ENCODE measurements at regions of chr10 and their contacts with region 1.

Region 1: GRCh38 chr10:98170249-98171117 is 36.0 kb downstream of the R3HCC1L start:
- DNase-seq: peak; percentile 71
- ATAC-seq: peak; percentile 81
- H3K4me3 Mint-ChIP-seq: no peak overlapping the region
- H3K27ac Mint-ChIP-seq: no peak overlapping the region; the same call in 1 of the 2 replicates
- H3K4me1 Mint-ChIP-seq: peaks cover 75% of the 10 kb centered on the region
- H3K27me3 Mint-ChIP-seq: no peaks in the 10 kb centered on the region
- CTCF ChIP-seq: peak; percentile 57

Region 2: GRCh38 chr10:98019784-98020183 is 150.7 kb before region 1 on chr10:
- CTCF ChIA-PET with region 1: no interaction called
- POLR2A ChIA-PET with region 1: no interaction called
- DNase-seq: no peak
- ATAC-seq: no peak
- H3K4me3 Mint-ChIP-seq: no peak overlapping the region
- H3K27ac Mint-ChIP-seq: no peak overlapping the region
- H3K4me1 Mint-ChIP-seq: no peaks in the 10 kb centered on the region
- H3K27me3 Mint-ChIP-seq: peaks cover 7% of the 10 kb centered on the region; the same call in 1 of the 2 replicates
- CTCF ChIP-seq: no peak

Region 3: DNA sequence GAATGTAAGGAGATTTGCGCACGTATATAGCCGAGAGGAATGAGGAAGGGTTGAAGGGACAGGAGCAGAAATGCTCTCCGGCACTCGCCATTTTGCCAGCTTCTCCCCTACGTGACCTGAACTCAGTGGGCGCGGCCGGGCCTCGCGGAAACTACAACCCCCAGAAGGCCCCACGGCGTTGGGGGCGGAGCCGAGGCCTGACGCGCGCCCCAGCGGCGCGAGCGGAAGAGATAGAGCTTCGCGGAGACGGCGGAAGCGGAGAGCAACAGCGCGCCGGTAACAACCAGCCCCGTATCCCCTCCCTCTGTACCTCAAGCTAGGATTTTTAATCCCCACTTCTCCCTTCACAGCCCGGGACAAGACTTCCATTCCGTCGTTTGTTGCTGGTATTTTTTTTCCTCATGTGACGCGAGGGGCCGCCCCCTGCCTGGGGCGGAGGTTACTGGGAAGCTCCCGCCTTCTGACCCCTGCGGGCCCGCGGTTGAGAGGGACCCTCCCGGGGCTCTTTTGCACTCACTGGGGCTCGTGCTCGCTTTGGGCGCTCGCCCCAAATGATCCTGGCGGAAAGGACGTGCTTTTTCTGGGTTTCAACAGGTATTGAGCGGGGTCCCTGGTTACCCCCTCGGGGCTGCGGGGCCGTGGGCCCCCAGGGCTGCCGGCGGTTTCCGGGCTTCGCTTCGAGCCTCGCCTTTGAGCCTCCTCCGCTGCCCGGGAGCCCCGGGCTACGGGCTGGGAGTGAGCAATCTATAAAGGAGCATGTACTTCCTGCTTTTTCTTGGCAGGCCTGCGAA is 35.9 kb before region 1 on chr10 and contains the start of gene R3HCC1L:
- CTCF ChIA-PET with region 1: interaction called, 17 read pairs
- POLR2A ChIA-PET with region 1: interaction called, 3 read pairs
- DNase-seq: peak; percentile 93
- ATAC-seq: peak; percentile 95
- H3K4me3 Mint-ChIP-seq: peak within 1 kb of the TSS; percentile 92
- H3K27ac Mint-ChIP-seq: peak within 1 kb of the TSS; percentile 87
- H3K4me1 Mint-ChIP-seq: peaks cover 31% of the 10 kb centered on the region
- H3K27me3 Mint-ChIP-seq: no peaks in the 10 kb centered on the region
- CTCF ChIP-seq: no peak
- total RNA-seq, gene R3HCC1L: 14.0 to 15.0 TPM (median 14.7 TPM) in 3 replicates

Region 4: DNA sequence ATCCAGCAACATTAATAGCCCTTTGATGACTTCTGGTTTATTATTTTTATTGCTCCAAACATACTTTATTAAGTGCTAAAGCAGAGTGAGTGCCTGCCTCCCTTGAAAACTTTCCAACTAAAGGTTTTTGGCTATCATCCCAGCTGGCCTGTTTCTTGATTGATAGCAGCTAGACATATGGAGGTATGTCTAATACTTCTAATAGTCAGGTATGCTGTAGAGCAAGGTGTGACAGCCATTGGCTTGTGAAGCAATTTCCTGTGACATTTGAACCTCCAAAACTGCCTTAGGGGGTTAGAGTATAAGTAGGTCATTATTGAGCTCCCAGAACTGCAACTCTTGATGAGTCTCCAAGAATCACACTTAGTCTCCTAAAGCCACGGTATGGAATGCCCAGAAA is 41.7 kb after region 1 on chr10:
- CTCF ChIA-PET with region 1: interaction called, 10 read pairs
- POLR2A ChIA-PET with region 1: no interaction called
- DNase-seq: no peak
- ATAC-seq: no peak
- H3K4me3 Mint-ChIP-seq: no peak overlapping the region
- H3K27ac Mint-ChIP-seq: no peak overlapping the region
- H3K4me1 Mint-ChIP-seq: peaks cover 4% of the 10 kb centered on the region; the same call in 1 of the 2 replicates
- H3K27me3 Mint-ChIP-seq: no peaks in the 10 kb centered on the region
- CTCF ChIP-seq: no peak